ENCODE measurements at regions of chr17 and their contacts with region 1.

Region 1: GRCh38 chr17:49191917-49192741 is 18.2 kb downstream of the GNGT2 start:
- DNase-seq: peak; percentile 64
- CTCF ChIP-seq: peak; percentile 46

Region 2: DNA sequence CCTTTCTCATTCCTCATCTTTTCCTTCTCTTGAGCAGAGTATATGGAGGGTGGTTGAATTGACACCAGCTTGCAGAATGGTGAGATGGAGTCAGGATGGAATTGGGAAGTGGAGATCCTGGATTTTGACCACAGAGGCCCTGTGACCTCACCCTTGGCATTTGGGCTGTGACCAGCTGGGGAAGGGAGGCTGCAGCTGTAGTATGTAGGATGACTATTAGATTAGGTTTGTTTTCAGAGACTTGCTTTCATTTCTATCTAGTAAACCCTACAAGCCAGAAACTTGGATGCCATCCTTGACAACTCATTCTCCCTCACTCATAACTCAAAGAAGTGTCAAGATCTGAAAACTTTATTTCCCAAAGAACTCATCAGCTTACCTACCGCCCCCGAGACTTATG is 12.4 kb after region 1 on chr17:
- CTCF ChIA-PET with region 1: interaction called, 12 read pairs
- POLR2A ChIA-PET with region 1: interaction called, 24 read pairs
- DNase-seq: no peak
- CTCF ChIP-seq: no peak

Region 3: GRCh38 chr17:49210158-49211029 is 18.3 kb after region 1 on chr17 and contains the starts of genes ABI3 and GNGT2:
- CTCF ChIA-PET with region 1: interaction called, 20 read pairs
- POLR2A ChIA-PET with region 1: interaction called, 24 read pairs
- DNase-seq: peak; percentile 93
- CTCF ChIP-seq: no peak

Region 4: GRCh38 chr17:49230636-49231562 is 38.8 kb after region 1 on chr17 and contains the start of gene PHOSPHO1:
- CTCF ChIA-PET with region 1: interaction called, 74 read pairs
- POLR2A ChIA-PET with region 1: no interaction called
- DNase-seq: peak; percentile 92
- CTCF ChIP-seq: no peak

Region 5: GRCh38 chr17:49454050-49454449 is 261.9 kb after region 1 on chr17:
- CTCF ChIA-PET with region 1: no interaction called
- POLR2A ChIA-PET with region 1: no interaction called
- DNase-seq: no peak
- CTCF ChIP-seq: no peak